Activated CD4-positive, alpha-beta memory T cell treated with anti-CD3 and anti-CD28 coated beads, Interleukin-2, amount 10 ng/mL, durations not matched to agents 7 days and 5 days (primary cell): ENCODE measurements at regions of chr6 and their contacts with region 1.

Region 1: GRCh38 chr6:43667245-43668150 is 20.1 kb downstream of the MRPS18A start:
- DNase-seq: peak; percentile 82
- H3K4me3 Mint-ChIP-seq: no peak overlapping the region
- H3K27ac Mint-ChIP-seq: no peak overlapping the region
- H3K4me1 Mint-ChIP-seq: peaks cover 46% of the 10 kb centered on the region
- H3K27me3 Mint-ChIP-seq: peaks cover 7% of the 10 kb centered on the region

Region 2: GRCh38 chr6:41996997-41997396 is 1670.5 kb before region 1 on chr6:
- CTCF ChIA-PET with region 1: no interaction called
- POLR2A ChIA-PET with region 1: no interaction called
- DNase-seq: no peak
- H3K4me3 Mint-ChIP-seq: no peak overlapping the region
- H3K27ac Mint-ChIP-seq: no peak overlapping the region
- H3K4me1 Mint-ChIP-seq: peaks cover 9% of the 10 kb centered on the region
- H3K27me3 Mint-ChIP-seq: no peaks in the 10 kb centered on the region

Region 3: GRCh38 chr6:43228951-43229802 is 438.3 kb before region 1 on chr6 and contains the start of gene DNPH1:
- CTCF ChIA-PET with region 1: no interaction called
- POLR2A ChIA-PET with region 1: no interaction called
- DNase-seq: peak; percentile 83
- H3K4me3 Mint-ChIP-seq: peak within 1 kb of the TSS; percentile 84
- H3K27ac Mint-ChIP-seq: peak within 1 kb of the TSS; percentile 83
- H3K4me1 Mint-ChIP-seq: peaks cover 43% of the 10 kb centered on the region
- H3K27me3 Mint-ChIP-seq: peaks cover 9% of the 10 kb centered on the region
- total RNA-seq, gene DNPH1: 39.6 to 42.5 TPM

Region 4: GRCh38 chr6:43635387-43636307 is 31.9 kb before region 1 on chr6 and contains the start of gene MAD2L1BP:
- CTCF ChIA-PET with region 1: interaction called, 11 read pairs
- POLR2A ChIA-PET with region 1: interaction called, 11 read pairs
- DNase-seq: peak; percentile 92
- H3K4me3 Mint-ChIP-seq: peak within 1 kb of the TSS; percentile 94
- H3K27ac Mint-ChIP-seq: peak within 1 kb of the TSS; percentile 87
- H3K4me1 Mint-ChIP-seq: peaks cover 57% of the 10 kb centered on the region
- H3K27me3 Mint-ChIP-seq: no peaks in the 10 kb centered on the region
- total RNA-seq, gene MAD2L1BP: 40.4 to 41.8 TPM

Region 5: GRCh38 chr6:43687437-43688347 is 20.2 kb after region 1 on chr6 and contains the start of gene MRPS18A:
- CTCF ChIA-PET with region 1: interaction called, 22 read pairs
- POLR2A ChIA-PET with region 1: interaction called, 23 read pairs
- DNase-seq: peak; percentile 88
- H3K4me3 Mint-ChIP-seq: peak within 1 kb of the TSS; percentile 81
- H3K27ac Mint-ChIP-seq: peak within 1 kb of the TSS; percentile 80
- H3K4me1 Mint-ChIP-seq: peaks cover 40% of the 10 kb centered on the region
- H3K27me3 Mint-ChIP-seq: no peaks in the 10 kb centered on the region
- total RNA-seq, gene MRPS18A: 38.5 to 40.5 TPM

Region 6: DNA sequence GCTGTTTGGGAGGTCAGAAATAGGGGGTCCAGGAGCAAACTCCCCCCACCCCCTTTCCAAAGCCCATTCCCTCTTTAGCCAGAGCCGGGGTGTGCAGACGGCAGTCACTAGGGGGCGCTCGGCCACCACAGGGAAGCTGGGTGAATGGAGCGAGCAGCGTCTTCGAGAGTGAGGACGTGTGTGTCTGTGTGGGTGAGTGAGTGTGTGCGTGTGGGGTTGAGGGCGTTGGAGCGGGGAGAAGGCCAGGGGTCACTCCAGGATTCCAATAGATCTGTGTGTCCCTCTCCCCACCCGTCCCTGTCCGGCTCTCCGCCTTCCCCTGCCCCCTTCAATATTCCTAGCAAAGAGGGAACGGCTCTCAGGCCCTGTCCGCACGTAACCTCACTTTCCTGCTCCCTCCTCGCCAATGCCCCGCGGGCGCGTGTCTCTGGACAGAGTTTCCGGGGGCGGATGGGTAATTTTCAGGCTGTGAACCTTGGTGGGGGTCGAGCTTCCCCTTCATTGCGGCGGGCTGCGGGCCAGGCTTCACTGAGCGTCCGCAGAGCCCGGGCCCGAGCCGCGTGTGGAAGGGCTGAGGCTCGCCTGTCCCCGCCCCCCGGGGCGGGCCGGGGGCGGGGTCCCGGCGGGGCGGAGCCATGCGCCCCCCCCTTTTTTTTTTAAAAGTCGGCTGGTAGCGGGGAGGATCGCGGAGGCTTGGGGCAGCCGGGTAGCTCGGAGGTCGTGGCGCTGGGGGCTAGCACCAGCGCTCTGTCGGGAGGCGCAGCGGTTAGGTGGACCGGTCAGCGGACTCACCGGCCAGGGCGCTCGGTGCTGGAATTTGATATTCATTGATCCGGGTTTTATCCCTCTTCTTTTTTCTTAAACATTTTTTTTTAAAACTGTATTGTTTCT is 102.3 kb after region 1 on chr6 and contains the start of gene VEGFA:
- CTCF ChIA-PET with region 1: interaction called, 22 read pairs
- POLR2A ChIA-PET with region 1: interaction called, 3 read pairs
- DNase-seq: peak; percentile 88
- H3K4me3 Mint-ChIP-seq: peak within 1 kb of the TSS; percentile 90
- H3K27ac Mint-ChIP-seq: peak within 1 kb of the TSS; percentile 75
- H3K4me1 Mint-ChIP-seq: peaks cover 34% of the 10 kb centered on the region
- H3K27me3 Mint-ChIP-seq: peaks cover 3% of the 10 kb centered on the region
- total RNA-seq, gene VEGFA: 48.1 to 49.5 TPM

Region 7: GRCh38 chr6:43774776-43775534 is 107.5 kb after region 1 on chr6:
- CTCF ChIA-PET with region 1: interaction called, 22 read pairs
- POLR2A ChIA-PET with region 1: no interaction called
- DNase-seq: peak; percentile 73
- H3K4me3 Mint-ChIP-seq: no peak overlapping the region
- H3K27ac Mint-ChIP-seq: no peak overlapping the region
- H3K4me1 Mint-ChIP-seq: peaks cover 49% of the 10 kb centered on the region
- H3K27me3 Mint-ChIP-seq: no peaks in the 10 kb centered on the region

Region 8: DNA sequence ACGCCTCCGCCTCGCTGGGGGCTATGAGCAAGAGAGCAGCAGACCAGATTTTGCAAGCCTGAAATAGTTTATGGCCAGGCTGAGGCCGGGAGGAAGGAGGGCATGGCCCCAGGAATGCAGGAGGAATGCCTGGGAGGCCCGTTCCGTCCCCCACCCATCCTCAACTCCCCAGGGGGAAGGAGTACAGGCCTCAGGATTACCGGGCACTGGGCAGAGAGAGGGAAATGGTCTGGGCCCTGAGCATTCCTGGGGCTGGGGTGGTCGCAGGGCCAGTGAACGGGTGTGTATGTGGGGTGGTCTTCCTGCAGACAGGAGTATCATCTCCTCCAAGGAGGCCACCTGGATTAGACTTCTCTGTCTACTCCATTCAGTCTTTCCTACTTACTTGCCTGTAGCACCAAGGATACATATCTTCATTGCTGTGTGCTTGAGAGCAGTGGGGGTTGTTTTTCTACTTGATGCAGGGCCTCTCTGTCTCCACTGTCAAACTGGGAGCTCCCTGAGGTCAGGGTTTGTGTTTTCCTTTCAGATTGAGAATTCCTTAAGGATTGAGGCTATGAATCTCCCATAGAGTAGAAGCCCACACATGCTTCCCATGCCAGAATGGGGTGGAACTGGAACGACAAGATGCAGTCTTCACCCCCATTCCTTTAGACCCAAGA is 183.8 kb after region 1 on chr6:
- CTCF ChIA-PET with region 1: no interaction called
- POLR2A ChIA-PET with region 1: no interaction called
- DNase-seq: no peak
- H3K4me3 Mint-ChIP-seq: no peak overlapping the region
- H3K27ac Mint-ChIP-seq: no peak overlapping the region
- H3K4me1 Mint-ChIP-seq: no peaks in the 10 kb centered on the region
- H3K27me3 Mint-ChIP-seq: peaks cover 7% of the 10 kb centered on the region